A673 (cell line): ENCODE measurements at regions of chr5 and their contacts with region 1.

Region 1: GRCh38 chr5:135335916-135336315 is 63.1 kb downstream of the MACROH2A1 start:
- DNase-seq: no peak
- H3K4me3 ChIP-seq: no peak overlapping the region
- H3K27ac ChIP-seq: no peak overlapping the region
- H3K4me1 ChIP-seq: no peaks in the 10 kb centered on the region
- H3K27me3 ChIP-seq: no peaks in the 10 kb centered on the region
- CTCF ChIP-seq: no peak

Region 2: GRCh38 chr5:135718151-135718550 is 382.2 kb after region 1 on chr5:
- CTCF ChIA-PET with region 1: no interaction called
- POLR2A ChIA-PET with region 1: no interaction called
- intact Hi-C with region 1: no loop called
- DNase-seq: no peak
- H3K4me3 ChIP-seq: no peak overlapping the region
- H3K27ac ChIP-seq: no peak overlapping the region
- H3K4me1 ChIP-seq: peaks cover 7% of the 10 kb centered on the region
- H3K27me3 ChIP-seq: no peaks in the 10 kb centered on the region
- CTCF ChIP-seq: no peak

Region 3: GRCh38 chr5:135955525-135955924 is 619.6 kb after region 1 on chr5:
- CTCF ChIA-PET with region 1: no interaction called
- POLR2A ChIA-PET with region 1: no interaction called
- intact Hi-C with region 1: no loop called
- DNase-seq: no peak
- H3K4me3 ChIP-seq: no peak overlapping the region
- H3K27ac ChIP-seq: no peak overlapping the region
- H3K4me1 ChIP-seq: no peaks in the 10 kb centered on the region
- H3K27me3 ChIP-seq: peaks cover 3% of the 10 kb centered on the region
- CTCF ChIP-seq: no peak

Region 4: GRCh38 chr5:136295914-136296313 is 960.0 kb after region 1 on chr5:
- CTCF ChIA-PET with region 1: no interaction called
- POLR2A ChIA-PET with region 1: interaction called, 21 read pairs
- intact Hi-C with region 1: no loop called
- DNase-seq: no peak
- H3K4me3 ChIP-seq: no peak overlapping the region
- H3K27ac ChIP-seq: no peak overlapping the region
- H3K4me1 ChIP-seq: no peaks in the 10 kb centered on the region
- H3K27me3 ChIP-seq: peaks cover 28% of the 10 kb centered on the region
- CTCF ChIP-seq: no peak